ENCODE measurements at regions of chr1 and their contacts with region 1.

Region 1: DNA sequence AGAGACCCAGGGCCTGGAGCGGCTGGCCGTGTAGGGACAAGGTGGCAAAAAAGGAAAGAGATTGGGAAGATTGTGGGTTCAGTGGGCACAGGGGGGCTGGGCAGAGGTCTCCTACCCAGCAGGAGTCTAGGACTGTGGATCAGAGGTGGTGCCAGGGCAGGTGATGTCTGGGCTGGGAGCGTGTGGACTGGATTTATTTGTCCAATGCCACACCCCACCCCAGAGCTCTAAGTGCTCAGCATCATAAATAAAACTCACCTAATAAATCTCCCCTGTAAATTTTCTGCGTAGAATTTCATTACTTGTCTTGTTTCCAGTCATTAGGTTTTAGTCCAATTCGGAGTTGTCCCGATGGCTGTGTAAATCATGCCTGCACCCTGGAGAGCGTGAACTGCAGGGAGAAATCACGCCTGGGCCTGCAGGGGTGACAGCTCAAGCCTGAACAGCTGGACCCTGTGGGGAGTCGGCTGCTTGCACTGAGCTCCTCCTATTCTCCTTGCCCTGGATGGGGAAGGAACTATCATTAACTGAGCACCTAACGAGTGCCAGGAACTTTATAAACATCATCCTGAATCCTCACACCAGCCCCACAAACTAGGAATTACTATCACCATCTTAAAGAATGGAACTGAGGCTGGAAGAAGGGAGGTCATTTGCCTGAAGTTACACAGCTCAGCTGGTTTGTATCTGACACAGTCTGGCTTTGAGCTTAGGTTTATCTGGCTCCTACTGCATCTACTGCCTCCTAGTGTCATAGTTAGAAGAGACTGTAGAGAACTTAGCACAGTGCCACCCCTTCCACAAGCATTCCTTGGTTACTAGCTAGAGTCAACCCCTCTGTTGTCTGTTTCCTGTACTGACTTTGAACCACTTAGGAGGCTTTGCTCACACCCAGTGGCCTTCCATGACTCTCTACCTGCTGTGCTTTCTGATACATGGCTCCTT is 25.0 kb upstream of the POU3F1 start:
- H3K4me3 ChIP-seq: no peak overlapping the region
- H3K27ac ChIP-seq: no peak overlapping the region
- H3K4me1 ChIP-seq: no peaks in the 10 kb centered on the region
- CTCF ChIP-seq: no peak

Region 2: GRCh38 chr1:38026592-38027200 is 44.9 kb before region 1 on chr1:
- CTCF ChIA-PET with region 1: interaction called, 27 read pairs
- POLR2A ChIA-PET with region 1: interaction called, 3 read pairs
- H3K4me3 ChIP-seq: no peak overlapping the region
- H3K27ac ChIP-seq: no peak overlapping the region
- H3K4me1 ChIP-seq: peaks cover 19% of the 10 kb centered on the region
- CTCF ChIP-seq: peak; percentile 79

Measured in HEK293 (cell line).